Activated CD4-positive, alpha-beta T cell treated with anti-CD3 and anti-CD28 coated beads for 36 hours (primary cell): ENCODE measurements at regions of chr12 and their contacts with region 1.

Region 1: DNA sequence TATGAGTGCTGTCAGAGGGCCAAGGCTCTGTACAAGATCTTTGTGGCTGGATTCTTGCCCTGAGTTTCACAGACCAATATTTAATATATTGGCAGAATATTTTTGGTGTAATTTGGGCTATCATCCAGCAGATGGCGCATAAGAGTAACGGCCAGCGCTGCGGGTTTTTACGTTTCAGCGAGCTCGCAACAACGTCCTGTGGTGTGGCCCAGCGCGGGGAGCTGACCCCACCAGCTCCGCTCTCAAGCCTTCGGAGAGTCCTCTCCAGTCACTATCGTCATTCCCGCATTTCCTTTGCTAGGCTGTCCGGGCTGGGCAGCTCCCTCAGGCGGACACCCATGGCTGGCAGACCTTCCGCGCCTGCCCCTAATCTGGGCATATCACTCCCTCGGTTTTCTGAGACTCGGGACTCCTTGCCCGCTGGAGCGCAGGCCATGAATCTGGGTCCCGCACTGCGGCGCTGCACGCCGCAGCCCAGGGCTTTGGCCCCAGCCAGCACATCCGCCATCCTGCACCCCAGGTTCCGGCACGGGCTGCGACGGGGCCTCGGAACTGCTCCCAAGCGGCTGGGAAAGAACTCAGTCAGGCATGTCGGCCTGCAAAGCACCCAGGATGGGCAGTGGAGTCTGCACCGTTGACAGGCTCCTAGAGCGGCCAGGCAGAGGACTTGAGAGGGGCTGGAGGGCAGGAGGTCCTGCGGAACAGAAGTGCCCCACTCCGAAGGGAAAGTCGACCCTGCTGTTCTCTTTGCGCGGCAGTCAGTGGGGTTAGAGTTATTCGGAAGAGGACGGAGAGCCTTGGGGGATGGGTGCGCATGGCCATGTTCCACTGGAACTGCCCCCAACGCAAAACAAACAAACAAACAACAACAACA is 18.4 kb downstream of the OLR1 start:
- DNase-seq: peak; percentile 71
- ATAC-seq: peak; percentile 76
- H3K4me3 Mint-ChIP-seq: peak overlapping the region; percentile 78
- H3K27ac Mint-ChIP-seq: peak overlapping the region; percentile 47
- H3K4me1 Mint-ChIP-seq: peaks cover 9% of the 10 kb centered on the region
- H3K27me3 Mint-ChIP-seq: peaks cover 7% of the 10 kb centered on the region

Region 2: DNA sequence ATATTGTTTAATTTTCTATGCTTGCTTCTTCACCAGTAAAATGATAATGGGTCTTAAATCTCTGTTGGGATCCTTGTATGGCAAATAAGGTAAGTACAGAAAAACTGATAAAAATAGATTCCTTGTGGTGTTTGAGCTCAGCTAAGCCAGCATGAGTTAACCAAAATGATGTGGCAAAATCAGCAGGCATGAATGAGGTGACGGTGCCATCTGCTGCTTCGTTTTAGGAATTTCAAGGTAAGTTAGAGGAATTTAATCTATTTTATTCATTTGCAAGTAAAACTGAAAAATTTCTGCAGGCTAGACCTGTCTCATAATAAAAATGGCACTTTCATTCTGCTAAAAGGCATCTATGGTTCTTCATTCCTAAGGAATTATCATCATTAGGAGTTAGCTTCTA is 13.5 kb before region 1 on chr12:
- CTCF ChIA-PET with region 1: interaction called, 13 read pairs
- POLR2A ChIA-PET with region 1: no interaction called
- intact Hi-C with region 1: no loop called
- DNase-seq: peak; percentile 66
- ATAC-seq: no peak
- H3K4me3 Mint-ChIP-seq: no peak overlapping the region
- H3K27ac Mint-ChIP-seq: no peak overlapping the region
- H3K4me1 Mint-ChIP-seq: peaks cover 2% of the 10 kb centered on the region
- H3K27me3 Mint-ChIP-seq: peaks cover 2% of the 10 kb centered on the region

Region 3: DNA sequence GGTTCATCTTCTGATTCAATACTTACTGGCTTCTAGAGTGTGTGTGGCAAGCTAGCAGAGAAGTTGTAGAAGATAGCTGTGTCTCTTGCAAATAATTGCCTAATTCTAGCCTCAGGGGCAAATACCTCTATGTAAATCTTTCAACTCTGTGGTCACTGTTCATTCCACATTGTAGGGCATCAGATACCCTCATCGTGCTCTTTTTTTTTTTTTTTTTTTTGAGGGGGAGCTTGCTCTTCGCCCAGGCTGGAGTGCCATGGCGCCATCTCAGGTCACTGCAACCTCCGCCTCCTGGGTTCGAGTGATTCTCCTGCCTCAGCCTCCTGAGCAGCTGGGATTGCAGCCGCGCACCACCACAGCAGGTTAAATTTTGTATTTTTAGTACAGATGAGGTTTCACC is 16.8 kb after region 1 on chr12:
- CTCF ChIA-PET with region 1: interaction called, 14 read pairs
- POLR2A ChIA-PET with region 1: no interaction called
- intact Hi-C with region 1: no loop called
- DNase-seq: no peak
- ATAC-seq: no peak
- H3K4me3 Mint-ChIP-seq: no peak overlapping the region
- H3K27ac Mint-ChIP-seq: no peak overlapping the region
- H3K4me1 Mint-ChIP-seq: no peaks in the 10 kb centered on the region
- H3K27me3 Mint-ChIP-seq: peaks cover 12% of the 10 kb centered on the region

Region 4: DNA sequence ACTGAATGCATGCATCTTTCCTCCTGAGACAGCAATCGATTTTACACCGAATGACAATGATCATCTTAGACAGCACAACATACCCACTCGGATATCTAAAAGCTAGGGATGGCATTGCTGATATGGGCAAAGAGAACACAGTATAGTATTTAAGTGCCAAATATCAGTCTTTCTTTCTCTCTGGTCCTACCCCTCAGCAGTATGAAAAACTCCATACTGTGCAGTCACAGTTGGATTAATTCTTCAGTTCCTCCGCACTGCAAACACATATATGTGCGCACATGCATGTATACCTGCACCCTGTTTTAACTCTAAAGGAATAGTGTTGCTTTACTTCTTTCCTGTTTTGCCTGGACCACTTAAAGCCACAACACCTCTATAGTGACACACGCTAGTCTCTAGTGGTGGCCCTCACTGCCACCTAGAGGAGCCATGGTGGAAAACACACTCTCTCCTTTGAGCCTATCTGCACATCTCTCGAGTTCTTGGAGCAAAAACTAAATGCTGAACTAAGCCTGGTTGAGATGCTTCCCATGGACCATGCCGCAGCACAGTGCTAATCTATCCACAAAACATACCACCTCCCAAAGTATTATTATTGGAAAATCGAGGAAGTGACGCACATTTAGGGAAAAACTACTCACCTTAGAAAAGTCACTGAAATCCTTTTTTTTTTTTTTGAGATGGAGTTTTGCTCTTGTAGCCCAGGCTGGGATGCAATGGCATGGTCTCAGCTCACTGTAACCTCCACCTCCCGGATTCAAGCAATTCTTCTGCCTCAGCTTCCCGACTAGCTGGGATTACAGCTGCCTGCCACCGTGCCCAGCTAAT is 37.3 kb after region 1 on chr12:
- CTCF ChIA-PET with region 1: interaction called, 20 read pairs
- POLR2A ChIA-PET with region 1: no interaction called
- intact Hi-C with region 1: loop called (anchors 1 kb)
- DNase-seq: peak; percentile 68
- ATAC-seq: peak; percentile 100
- H3K4me3 Mint-ChIP-seq: no peak overlapping the region
- H3K27ac Mint-ChIP-seq: no peak overlapping the region
- H3K4me1 Mint-ChIP-seq: no peaks in the 10 kb centered on the region
- H3K27me3 Mint-ChIP-seq: peaks cover 11% of the 10 kb centered on the region

Region 5: DNA sequence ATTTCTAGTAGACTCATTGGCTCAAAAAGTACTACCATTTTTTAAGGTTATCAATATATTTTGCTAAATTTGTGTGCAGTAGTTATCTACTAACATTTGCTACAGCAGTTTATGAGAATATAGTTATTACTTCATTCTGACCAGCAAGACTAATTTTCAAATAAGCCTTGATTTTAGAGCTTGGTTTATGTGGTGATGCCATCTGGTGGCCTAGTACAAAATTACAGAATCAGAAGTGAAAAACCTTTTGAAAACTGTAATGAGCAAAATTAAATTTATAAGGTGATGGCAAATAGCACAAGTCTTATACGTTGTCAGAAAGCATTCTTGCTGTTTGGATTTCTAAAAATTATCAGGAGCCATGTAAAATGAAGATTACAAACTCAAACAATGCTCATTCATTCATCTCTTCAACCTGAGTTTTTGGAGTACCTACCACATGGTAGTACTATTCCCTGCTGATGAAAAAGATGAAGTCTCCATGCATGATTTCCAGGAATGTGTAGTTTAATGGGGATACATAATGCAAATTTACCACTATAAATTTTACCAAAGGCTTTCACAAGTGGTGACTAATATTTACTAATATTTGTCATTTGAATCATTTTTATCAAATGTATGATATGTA is 408.9 kb after region 1 on chr12:
- CTCF ChIA-PET with region 1: interaction called, 4 read pairs
- POLR2A ChIA-PET with region 1: no interaction called
- intact Hi-C with region 1: loop called (anchors 1 to 5 kb)
- DNase-seq: peak; percentile 22
- ATAC-seq: no peak
- H3K4me3 Mint-ChIP-seq: no peak overlapping the region
- H3K27ac Mint-ChIP-seq: no peak overlapping the region
- H3K4me1 Mint-ChIP-seq: peaks cover 4% of the 10 kb centered on the region
- H3K27me3 Mint-ChIP-seq: peaks cover 6% of the 10 kb centered on the region